Activated CD8-positive, alpha-beta T cell treated with anti-CD3 and anti-CD28 coated beads for 36 hours (primary cell): ENCODE measurements at regions of chr1 and their contacts with region 1.

Region 1: GRCh38 chr1:197924516-197925123 is 7.4 kb downstream of the LHX9 start:
- DNase-seq: peak; percentile 61
- ATAC-seq: peak; percentile 67
- H3K4me3 Mint-ChIP-seq: no peak overlapping the region
- H3K27ac Mint-ChIP-seq: no peak overlapping the region
- H3K4me1 Mint-ChIP-seq: peaks cover 22% of the 10 kb centered on the region
- H3K27me3 Mint-ChIP-seq: peaks cover 67% of the 10 kb centered on the region
- CTCF ChIP-seq: peak; percentile 74

Region 2: GRCh38 chr1:197521118-197521739 is 403.4 kb before region 1 on chr1:
- CTCF ChIA-PET with region 1: interaction called, 12 read pairs
- POLR2A ChIA-PET with region 1: no interaction called
- intact Hi-C with region 1: loop called (anchors 5 kb)
- DNase-seq: peak; percentile 26
- ATAC-seq: peak; percentile 79
- H3K4me3 Mint-ChIP-seq: no peak overlapping the region
- H3K27ac Mint-ChIP-seq: no peak overlapping the region
- H3K4me1 Mint-ChIP-seq: peaks cover 6% of the 10 kb centered on the region
- H3K27me3 Mint-ChIP-seq: no peaks in the 10 kb centered on the region
- CTCF ChIP-seq: peak; percentile 81

Region 3: DNA sequence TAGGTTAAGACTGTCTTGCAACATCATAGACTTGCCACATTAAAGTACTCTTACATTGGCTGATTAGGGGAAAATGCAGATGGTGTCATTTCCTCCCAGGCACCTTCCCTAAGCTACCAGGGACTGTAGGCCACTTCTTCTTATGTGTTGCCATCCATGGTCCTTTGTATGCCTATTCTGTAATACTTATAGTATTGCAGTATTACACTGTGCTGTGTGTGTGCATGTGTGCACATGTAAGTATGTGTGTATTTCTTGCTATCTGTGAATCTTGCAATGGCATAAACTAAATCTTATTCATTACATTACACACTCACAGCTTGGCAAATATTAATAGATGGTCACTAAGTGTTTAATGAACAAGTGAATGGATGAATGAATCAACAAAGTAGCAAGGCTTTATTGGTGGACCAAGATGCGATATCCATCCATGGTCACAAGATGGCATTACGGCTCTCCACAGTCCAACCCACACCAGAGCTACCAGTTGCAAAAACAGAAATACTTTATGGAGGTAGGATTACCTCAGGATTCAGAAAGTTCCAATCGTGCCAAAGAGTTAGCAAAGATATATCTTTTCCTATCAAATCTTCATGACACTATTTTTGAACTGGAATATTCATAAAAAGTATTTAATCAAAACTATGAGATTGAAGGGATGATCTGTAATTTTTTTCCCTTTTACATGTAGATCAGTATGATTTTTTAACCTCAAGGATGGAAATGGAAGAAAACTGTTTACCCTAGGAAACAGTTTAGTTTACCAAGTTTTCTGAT is 309.5 kb before region 1 on chr1:
- CTCF ChIA-PET with region 1: interaction called, 12 read pairs
- POLR2A ChIA-PET with region 1: no interaction called
- intact Hi-C with region 1: loop called (anchors 5 kb)
- DNase-seq: peak; percentile 43
- ATAC-seq: peak; percentile 77
- H3K4me3 Mint-ChIP-seq: no peak overlapping the region
- H3K27ac Mint-ChIP-seq: no peak overlapping the region
- H3K4me1 Mint-ChIP-seq: no peaks in the 10 kb centered on the region
- H3K27me3 Mint-ChIP-seq: no peaks in the 10 kb centered on the region
- CTCF ChIP-seq: peak; percentile 62

Region 4: GRCh38 chr1:197890936-197891335 is 33.7 kb before region 1 on chr1:
- CTCF ChIA-PET with region 1: no interaction called
- POLR2A ChIA-PET with region 1: no interaction called
- intact Hi-C with region 1: no loop called
- DNase-seq: no peak
- ATAC-seq: no peak
- H3K4me3 Mint-ChIP-seq: no peak overlapping the region
- H3K27ac Mint-ChIP-seq: no peak overlapping the region
- H3K4me1 Mint-ChIP-seq: no peaks in the 10 kb centered on the region
- H3K27me3 Mint-ChIP-seq: peaks cover 25% of the 10 kb centered on the region
- CTCF ChIP-seq: no peak

Region 5: GRCh38 chr1:197902454-197903195 is 22.0 kb before region 1 on chr1 and contains the start of gene C1orf53:
- CTCF ChIA-PET with region 1: interaction called, 16 read pairs
- POLR2A ChIA-PET with region 1: interaction called, 3 read pairs
- intact Hi-C with region 1: no loop called
- DNase-seq: peak; percentile 77
- ATAC-seq: peak; percentile 95
- H3K4me3 Mint-ChIP-seq: peak within 1 kb of the TSS; percentile 71
- H3K27ac Mint-ChIP-seq: peak within 1 kb of the TSS; percentile 88
- H3K4me1 Mint-ChIP-seq: peaks cover 15% of the 10 kb centered on the region
- H3K27me3 Mint-ChIP-seq: peaks cover 48% of the 10 kb centered on the region
- CTCF ChIP-seq: no peak
- total RNA-seq, gene C1orf53: 0.96 to 1.2 TPM